ENCODE measurements at regions of chr6 and their contacts with region 1.

Region 1: DNA sequence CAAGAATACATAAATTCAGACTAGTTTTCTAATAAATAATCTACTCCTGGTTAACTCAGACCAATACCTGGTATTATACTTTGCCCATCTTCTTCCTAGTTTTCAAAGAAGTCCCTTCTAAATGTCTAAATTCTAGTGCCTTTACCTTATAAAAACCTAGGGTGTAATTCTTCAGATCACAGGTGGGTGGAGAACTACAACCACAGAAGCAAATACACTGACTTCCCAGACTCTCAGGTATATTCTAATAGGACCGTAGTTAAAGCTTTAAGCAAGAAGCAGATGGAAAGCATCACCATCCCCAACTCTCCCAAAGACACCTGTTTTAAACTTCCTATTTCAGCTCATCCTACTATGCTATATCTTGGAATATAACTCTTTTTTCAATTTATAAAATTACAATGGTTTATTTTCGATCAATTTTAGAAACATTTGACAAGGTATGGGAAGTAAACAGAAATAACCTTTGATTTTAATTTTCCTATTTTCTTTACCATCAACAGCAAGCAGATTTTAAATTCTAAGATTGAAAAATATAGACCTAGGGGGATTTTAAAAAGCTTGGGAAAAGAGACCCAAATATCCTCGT is 15.8 kb downstream of the MAN1A1 start:
- DNase-seq: no peak
- H3K4me3 ChIP-seq: no peak overlapping the region
- H3K27ac ChIP-seq: no peak overlapping the region
- H3K4me1 ChIP-seq: peaks cover 5% of the 10 kb centered on the region
- H3K27me3 ChIP-seq: no peaks in the 10 kb centered on the region
- CTCF ChIP-seq: peak; percentile 48

Region 2: GRCh38 chr6:119129148-119129967 is 204.4 kb before region 1 on chr6:
- intact Hi-C with region 1: no loop called
- DNase-seq: peak; percentile 58
- H3K4me3 ChIP-seq: no peak overlapping the region
- H3K27ac ChIP-seq: no peak overlapping the region
- H3K4me1 ChIP-seq: peaks cover 7% of the 10 kb centered on the region
- H3K27me3 ChIP-seq: no peaks in the 10 kb centered on the region
- CTCF ChIP-seq: peak; percentile 78

Region 3: DNA sequence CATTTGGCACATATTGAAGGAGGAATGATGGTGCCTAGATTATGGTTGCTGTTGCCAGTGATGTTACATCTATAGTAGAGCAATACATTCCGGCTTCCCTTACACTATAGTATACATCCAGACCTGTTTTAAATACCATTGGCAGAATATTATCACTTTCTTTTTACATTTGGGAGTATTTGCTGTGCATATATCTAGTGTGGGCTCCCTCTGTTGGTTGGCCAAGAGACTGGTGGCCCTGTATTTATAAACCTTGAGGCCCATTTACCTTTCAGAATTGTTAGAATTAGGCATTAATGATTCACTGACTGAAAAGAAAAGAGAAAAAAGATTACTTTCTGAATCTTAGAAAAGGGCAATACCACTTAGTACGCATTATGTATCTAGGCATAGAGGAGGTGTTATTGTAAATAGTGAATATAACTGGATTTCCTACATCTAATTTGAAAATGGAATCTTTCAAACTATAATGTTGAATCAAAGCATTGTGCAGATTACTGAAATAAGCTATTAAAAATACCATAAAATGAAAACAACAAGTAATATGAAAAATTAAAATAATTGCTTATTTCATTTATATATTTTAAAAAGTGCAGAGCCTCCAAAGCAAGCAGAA is 644.6 kb after region 1 on chr6:
- intact Hi-C with region 1: loop called (anchors 10 kb)
- DNase-seq: no peak
- H3K4me3 ChIP-seq: no peak overlapping the region
- H3K27ac ChIP-seq: no peak overlapping the region
- H3K4me1 ChIP-seq: no peaks in the 10 kb centered on the region
- H3K27me3 ChIP-seq: no peaks in the 10 kb centered on the region
- CTCF ChIP-seq: peak; percentile 13